Heart right ventricle (tissue), 16 donors: ENCODE measurements at regions of chr2 and their contacts with region 1.

Region 1: GRCh38 chr2:39913648-39914461 is 134.8 kb upstream of the THUMPD2 start:
- DNase-seq: peak in 1 of 2 donors; percentile 26
- ATAC-seq: peak in 7 of 8 donors; percentile 63 to 82 (median 73)
- H3K4me3 ChIP-seq: no peak overlapping the region
- H3K27ac ChIP-seq: no peak overlapping the region
- H3K4me1 ChIP-seq: peaks cover 0 to 8% (median 4%) of the 10 kb centered on the region in 9 donors
- H3K27me3 ChIP-seq: peaks cover 0 to 4% (median 0%) of the 10 kb centered on the region in 7 donors
- CTCF ChIP-seq: peak; percentile 53 to 91 (median 81)

Region 2: DNA sequence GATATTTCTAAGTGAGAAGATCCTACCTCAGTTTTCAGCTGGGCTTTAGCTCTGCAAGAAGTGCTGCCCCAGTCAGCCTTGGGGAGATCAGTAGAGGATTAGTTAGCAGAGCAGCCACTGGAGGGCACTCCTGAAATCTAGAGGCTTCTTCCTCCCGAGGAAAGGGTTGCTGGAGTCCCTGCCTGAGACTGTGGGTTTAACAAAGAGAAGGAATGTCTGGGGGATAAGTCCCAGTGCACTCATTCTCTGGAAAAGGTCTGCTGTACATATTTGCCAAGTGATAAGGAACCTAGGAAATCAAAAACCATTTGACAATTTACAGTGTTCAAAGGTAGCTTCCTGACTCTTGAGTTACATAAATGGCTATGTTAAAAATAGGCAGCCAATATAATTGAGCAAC is 330.8 kb after region 1 on chr2:
- intact Hi-C with region 1: loop called in 1 of 10 experiments (anchors 10 kb)
- DNase-seq: peak; percentile 27 to 65
- ATAC-seq: peak; percentile 42 to 81 (median 66)
- H3K4me3 ChIP-seq: no peak overlapping the region
- H3K27ac ChIP-seq: peak overlapping the region in 8 of 10 donors; percentile 17 to 82 (median 56)
- H3K4me1 ChIP-seq: peaks cover 13 to 91% (median 44%) of the 10 kb centered on the region in 9 donors
- H3K27me3 ChIP-seq: no peaks in the 10 kb centered on the region
- CTCF ChIP-seq: peak in 8 of 9 donors; percentile 19 to 74 (median 58)

Region 3: DNA sequence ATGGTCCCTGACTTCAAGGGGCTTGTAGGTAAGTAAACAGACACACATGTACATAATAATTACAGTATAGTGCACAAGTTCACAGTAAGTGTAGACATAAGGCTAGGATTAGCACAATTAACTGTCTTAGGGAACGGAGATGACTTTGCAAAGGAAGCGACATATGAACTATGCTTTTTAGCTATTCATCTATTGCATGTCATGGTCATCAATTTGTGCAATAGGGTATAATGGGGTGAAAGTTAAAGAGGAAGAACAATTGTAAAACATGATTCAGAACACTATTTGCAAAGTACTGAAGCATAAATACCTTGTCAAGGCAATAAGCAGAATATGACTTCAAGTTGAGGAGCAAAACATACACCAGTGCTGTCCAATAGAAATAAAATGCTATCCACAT is 650.3 kb after region 1 on chr2:
- intact Hi-C with region 1: loop called in 2 of 10 experiments (anchors 5 kb)
- DNase-seq: no peak
- ATAC-seq: no peak
- H3K4me3 ChIP-seq: no peak overlapping the region
- H3K27ac ChIP-seq: no peak overlapping the region
- H3K4me1 ChIP-seq: no peaks in the 10 kb centered on the region
- H3K27me3 ChIP-seq: no peaks in the 10 kb centered on the region
- CTCF ChIP-seq: no peak

Region 4: DNA sequence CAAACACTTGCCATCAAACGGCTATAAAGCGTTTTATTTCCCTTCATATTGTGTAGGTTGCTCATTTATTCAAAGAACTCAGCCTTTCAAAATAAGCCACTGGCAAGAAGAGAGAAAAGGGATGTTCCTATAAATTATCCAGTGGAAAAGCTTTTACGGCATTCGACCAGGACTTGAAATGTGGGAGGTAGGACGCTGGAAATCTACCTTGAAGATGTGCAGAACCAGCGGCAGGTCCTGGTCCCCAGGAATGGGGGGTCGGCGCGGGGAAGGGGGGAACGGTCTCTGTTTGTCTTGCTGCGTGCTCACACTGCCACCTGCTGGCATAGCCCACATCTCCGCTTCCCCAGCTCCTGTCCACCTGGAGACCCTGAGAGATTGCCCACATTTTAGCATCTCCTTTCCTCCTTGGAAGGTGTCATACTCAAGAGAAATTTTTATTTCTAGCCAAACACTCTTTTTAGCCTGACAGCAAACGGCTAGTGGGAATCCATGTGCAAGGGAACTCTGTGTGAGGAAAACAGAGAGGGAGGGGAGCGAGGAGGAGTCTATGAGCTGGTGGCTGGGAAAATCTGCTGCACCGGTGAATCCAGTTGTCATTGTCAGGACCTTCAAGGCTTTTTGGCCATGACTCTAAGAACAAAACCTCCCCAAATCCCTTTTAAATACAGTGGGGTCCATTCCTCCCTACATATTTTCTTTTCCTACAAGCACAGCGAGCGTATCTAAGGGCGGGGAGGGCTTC is 1785.0 kb after region 1 on chr2:
- intact Hi-C with region 1: loop called in 6 of 10 experiments (anchors 5 to 10 kb)
- DNase-seq: peak; percentile 43 to 62
- ATAC-seq: peak; percentile 17 to 81 (median 74)
- H3K4me3 ChIP-seq: peak overlapping the region in 8 of 10 donors; percentile 6 to 41 (median 26)
- H3K27ac ChIP-seq: no peak overlapping the region
- H3K4me1 ChIP-seq: peaks cover 0 to 12% (median 0%) of the 10 kb centered on the region in 9 donors
- H3K27me3 ChIP-seq: no peaks in the 10 kb centered on the region
- CTCF ChIP-seq: peak; percentile 77 to 96 (median 87)

Region 5: GRCh38 chr2:41782306-41783158 is 1868.7 kb after region 1 on chr2:
- intact Hi-C with region 1: loop called in 6 of 10 experiments (anchors 2 to 10 kb)
- DNase-seq: peak in 1 of 2 donors; percentile 16
- ATAC-seq: peak in 2 of 8 donors; percentile 20 to 48
- H3K4me3 ChIP-seq: no peak overlapping the region
- H3K27ac ChIP-seq: no peak overlapping the region
- H3K4me1 ChIP-seq: peaks cover 0 to 5% (median 0%) of the 10 kb centered on the region in 9 donors
- H3K27me3 ChIP-seq: peaks cover 0 to 5% (median 0%) of the 10 kb centered on the region in 7 donors
- CTCF ChIP-seq: peak; percentile 77 to 95 (median 86)